ENCODE measurements at regions of chr16 and their contacts with region 1.

Region 1: DNA sequence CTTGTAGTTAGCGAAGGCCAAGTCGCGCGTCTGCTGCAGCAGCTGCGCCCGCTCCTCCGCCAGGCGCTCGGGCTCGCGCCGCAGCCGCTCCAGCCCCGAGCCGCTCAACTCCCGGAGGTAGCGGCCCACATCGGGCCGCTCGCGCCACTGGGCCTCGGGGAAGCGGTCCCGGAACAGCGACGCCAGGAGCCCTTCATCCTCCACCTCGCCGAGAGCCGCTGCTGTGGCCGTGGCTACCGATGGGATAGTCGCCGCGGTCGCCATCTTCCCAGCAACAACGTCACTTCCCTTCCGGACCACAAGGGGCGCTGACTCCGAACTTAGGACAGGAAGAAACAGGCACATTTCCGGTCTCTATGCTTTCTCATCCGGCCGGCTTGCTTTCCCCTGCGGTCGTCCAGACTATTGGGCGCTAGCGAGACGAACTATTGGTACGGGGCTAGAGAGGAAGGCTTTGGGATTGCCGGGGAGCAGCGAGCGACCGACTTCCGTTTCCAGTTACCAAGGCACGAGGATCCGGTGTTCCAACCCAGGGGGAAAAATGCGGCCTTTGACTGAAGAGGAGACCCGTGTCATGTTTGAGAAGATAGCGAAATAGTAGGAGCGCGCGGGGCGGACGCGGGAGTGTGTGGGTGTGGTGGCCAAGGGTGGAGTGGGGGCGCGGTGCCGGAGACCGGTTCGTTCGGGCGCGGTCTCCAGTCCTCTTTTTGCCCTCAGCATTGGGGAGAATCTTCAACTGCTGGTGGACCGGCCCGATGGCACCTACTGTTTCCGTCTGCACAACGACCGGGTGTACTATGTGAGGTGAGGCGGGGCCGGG is at the starts of genes COG8 and NIP7:
- DNase-seq: peak; percentile 97
- H3K4me3 ChIP-seq: peak within 1 kb of the TSS; percentile 70 to 88
- H3K27ac ChIP-seq: peak within 1 kb of the TSS; percentile 87 to 95
- H3K4me1 ChIP-seq: peaks cover 0 to 27% (median 24%) of the 10 kb centered on the region in 4 donors
- H3K27me3 ChIP-seq: no peaks in the 10 kb centered on the region
- CTCF ChIP-seq: peak; percentile 82 to 92

Region 2: DNA sequence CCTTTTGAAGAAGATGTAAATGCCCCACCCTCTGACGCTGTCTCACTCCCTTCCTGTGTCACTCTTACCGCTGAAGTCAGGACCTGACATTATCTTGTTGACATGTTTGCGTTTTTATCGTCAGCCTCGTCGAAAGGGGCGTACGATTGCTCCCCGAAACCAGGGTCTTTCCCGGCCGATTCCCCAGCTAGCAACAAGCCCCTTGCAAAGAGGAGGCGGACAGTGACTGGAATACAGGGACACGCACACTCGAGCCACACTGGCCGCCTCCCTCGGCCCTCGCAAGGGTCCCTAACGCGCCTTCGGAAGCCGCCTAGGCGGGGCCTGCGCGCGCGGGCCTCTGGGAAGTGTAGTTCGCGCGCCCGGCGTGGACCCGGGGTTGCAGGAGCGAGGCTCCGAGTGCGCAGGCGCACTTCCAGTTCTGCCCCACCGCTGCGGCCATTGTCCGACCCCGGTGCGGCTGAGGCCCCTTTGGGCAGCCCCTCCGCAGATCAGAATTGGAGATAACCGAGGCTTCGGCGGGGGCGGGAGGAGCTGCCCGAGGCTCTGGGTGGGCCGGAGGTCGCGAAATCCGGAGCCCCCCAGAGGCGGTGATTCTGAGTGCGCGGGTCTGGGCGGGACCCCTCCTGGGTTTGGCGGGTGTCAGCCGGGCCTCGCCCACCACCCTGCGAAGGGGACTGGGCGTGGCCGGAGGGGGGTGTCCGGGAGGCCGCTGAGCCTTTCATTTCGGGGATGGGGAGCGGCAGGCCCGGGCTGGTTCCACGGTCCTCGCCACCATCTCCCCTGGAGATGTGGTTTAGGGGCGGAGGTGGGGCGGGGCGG is 800.4 kb before region 1 on chr16 and contains the start of gene ZFP90:
- intact Hi-C with region 1: loop called (anchors 10 kb)
- DNase-seq: peak; percentile 85 to 91
- H3K4me3 ChIP-seq: peak within 1 kb of the TSS; percentile 88 to 93
- H3K27ac ChIP-seq: peak within 1 kb of the TSS; percentile 79 to 81
- H3K4me1 ChIP-seq: peaks cover 0 to 8% (median 5%) of the 10 kb centered on the region in 4 donors
- H3K27me3 ChIP-seq: no peaks in the 10 kb centered on the region
- CTCF ChIP-seq: no peak

Region 3: DNA sequence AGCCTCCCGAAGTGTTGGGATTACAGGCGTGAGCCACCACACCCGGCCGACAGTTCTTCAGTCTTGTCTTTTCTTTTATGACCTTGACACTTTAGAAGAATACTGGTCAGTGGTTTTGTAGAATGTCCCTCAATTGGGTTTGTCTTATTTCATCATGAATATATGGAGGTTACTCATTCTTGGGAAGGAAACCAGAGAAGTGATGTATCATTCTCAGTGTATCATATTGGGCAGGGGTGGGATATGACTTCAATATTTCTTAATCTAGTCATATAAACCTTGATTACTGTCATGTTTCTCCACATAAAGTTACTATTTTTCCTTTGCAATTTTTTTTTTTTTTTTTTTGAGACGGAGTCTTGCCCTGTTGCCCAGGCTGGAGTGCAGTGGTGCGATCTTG is 115.6 kb before region 1 on chr16:
- intact Hi-C with region 1: no loop called
- DNase-seq: no peak
- H3K4me3 ChIP-seq: no peak overlapping the region
- H3K27ac ChIP-seq: no peak overlapping the region
- H3K4me1 ChIP-seq: peaks cover 0 to 14% (median 0%) of the 10 kb centered on the region in 4 donors
- H3K27me3 ChIP-seq: no peaks in the 10 kb centered on the region
- CTCF ChIP-seq: no peak

Region 4: DNA sequence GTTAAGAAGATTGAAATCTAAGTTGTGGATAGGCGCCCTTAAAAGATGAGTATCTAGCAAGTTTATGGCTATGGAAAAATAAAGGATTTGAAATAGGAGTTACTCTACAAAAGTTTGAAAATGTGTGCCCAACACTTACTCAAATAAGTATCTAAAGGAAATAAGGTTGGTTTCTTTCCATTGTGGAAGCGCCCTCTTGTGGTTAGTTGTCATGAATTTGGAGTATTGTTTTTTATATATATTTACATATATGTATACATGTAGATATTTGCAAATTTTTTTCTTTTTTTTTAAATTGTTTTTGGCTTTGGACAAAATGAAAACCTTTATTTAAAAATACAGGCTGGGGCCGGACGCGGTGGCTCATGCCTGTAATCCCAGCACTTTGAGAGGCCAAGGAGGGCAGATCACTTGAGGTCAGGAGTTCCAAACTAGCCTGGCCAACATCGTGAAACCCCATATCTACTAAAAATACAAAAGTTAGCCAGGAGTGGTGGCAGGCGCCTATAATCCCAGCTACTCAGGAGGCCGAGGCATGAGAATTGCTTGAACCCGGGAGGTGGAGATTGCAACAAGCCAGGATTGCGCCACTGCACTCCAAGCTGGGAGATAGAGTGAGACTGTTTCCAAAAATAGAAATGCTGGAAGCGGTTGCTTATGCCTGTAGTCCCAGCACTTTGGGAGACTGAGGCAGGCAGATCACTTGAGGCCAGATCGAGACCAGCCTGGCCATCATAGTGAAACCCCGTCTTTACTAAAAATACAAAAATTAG is 52.4 kb before region 1 on chr16:
- intact Hi-C with region 1: no loop called
- DNase-seq: peak; percentile 83 to 90
- H3K4me3 ChIP-seq: no peak overlapping the region
- H3K27ac ChIP-seq: peak overlapping the region; percentile 17 to 52
- H3K4me1 ChIP-seq: peaks cover 0 to 29% (median 9%) of the 10 kb centered on the region in 4 donors
- H3K27me3 ChIP-seq: no peaks in the 10 kb centered on the region
- CTCF ChIP-seq: peak; percentile 57 to 68

Measured in tibial artery (tissue), 4 donors.